ENCODE measurements at regions of chr9 and their contacts with region 1.

Region 1: GRCh38 chr9:99595796-99596195 is 225.9 kb upstream of the NR4A3 start:
- DNase-seq: no peak
- ATAC-seq: peak; percentile 78
- H3K4me3 Mint-ChIP-seq: peak overlapping the region; percentile 21
- H3K27ac Mint-ChIP-seq: peak overlapping the region; percentile 85
- H3K4me1 Mint-ChIP-seq: peaks cover 54% of the 10 kb centered on the region
- H3K27me3 Mint-ChIP-seq: no peaks in the 10 kb centered on the region
- CTCF ChIP-seq: no peak

Region 2: GRCh38 chr9:99539925-99540324 is 55.9 kb before region 1 on chr9:
- CTCF ChIA-PET with region 1: no interaction called
- POLR2A ChIA-PET with region 1: no interaction called
- intact Hi-C with region 1: no loop called
- DNase-seq: no peak
- ATAC-seq: no peak
- H3K4me3 Mint-ChIP-seq: no peak overlapping the region
- H3K27ac Mint-ChIP-seq: no peak overlapping the region
- H3K4me1 Mint-ChIP-seq: no peaks in the 10 kb centered on the region
- H3K27me3 Mint-ChIP-seq: peaks cover 4% of the 10 kb centered on the region
- CTCF ChIP-seq: no peak

Region 3: GRCh38 chr9:99633265-99633664 is 37.5 kb after region 1 on chr9:
- CTCF ChIA-PET with region 1: no interaction called
- POLR2A ChIA-PET with region 1: interaction called, 3 read pairs
- intact Hi-C with region 1: loop called (anchors 1 kb)
- DNase-seq: no peak
- ATAC-seq: peak; percentile 28
- H3K4me3 Mint-ChIP-seq: peak overlapping the region; percentile 66
- H3K27ac Mint-ChIP-seq: peak overlapping the region; percentile 90
- H3K4me1 Mint-ChIP-seq: peaks cover 39% of the 10 kb centered on the region
- H3K27me3 Mint-ChIP-seq: no peaks in the 10 kb centered on the region
- CTCF ChIP-seq: no peak